GM18951 (cell line): ENCODE measurements at regions of chr7 and their contacts with region 1.

Region 1: GRCh38 chr7:134992626-134993179 is 6.4 kb downstream of the AGBL3 start:
- POLR2A ChIP-seq: peak; percentile 53

Region 2: GRCh38 chr7:135151533-135151932 is 158.8 kb after region 1 on chr7:
- in situ Hi-C with region 1: loop called (anchors 10 kb)
- POLR2A ChIP-seq: peak; percentile 33

Region 3: DNA sequence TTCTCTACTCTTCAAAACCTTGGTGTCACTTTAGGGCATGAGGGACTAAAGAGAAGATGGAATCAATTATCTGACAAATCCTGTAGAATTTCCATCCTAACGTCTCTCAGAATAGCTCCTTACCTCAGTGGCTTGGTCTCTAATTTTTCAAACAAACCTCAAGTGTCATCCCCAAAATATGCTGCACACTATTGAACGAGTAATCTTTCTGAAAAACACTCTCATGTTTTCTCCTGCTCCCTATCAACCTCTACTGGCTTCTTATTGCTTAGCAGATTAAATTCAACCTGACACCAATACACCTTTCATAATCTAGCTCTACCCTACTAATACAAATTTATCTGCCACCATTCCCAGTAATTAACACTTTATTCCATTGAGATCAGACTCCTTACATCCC is 508.7 kb after region 1 on chr7:
- in situ Hi-C with region 1: no loop called
- POLR2A ChIP-seq: no peak